A549 (cell line): ENCODE measurements at regions of chr11 and their contacts with region 1.

Region 1: DNA sequence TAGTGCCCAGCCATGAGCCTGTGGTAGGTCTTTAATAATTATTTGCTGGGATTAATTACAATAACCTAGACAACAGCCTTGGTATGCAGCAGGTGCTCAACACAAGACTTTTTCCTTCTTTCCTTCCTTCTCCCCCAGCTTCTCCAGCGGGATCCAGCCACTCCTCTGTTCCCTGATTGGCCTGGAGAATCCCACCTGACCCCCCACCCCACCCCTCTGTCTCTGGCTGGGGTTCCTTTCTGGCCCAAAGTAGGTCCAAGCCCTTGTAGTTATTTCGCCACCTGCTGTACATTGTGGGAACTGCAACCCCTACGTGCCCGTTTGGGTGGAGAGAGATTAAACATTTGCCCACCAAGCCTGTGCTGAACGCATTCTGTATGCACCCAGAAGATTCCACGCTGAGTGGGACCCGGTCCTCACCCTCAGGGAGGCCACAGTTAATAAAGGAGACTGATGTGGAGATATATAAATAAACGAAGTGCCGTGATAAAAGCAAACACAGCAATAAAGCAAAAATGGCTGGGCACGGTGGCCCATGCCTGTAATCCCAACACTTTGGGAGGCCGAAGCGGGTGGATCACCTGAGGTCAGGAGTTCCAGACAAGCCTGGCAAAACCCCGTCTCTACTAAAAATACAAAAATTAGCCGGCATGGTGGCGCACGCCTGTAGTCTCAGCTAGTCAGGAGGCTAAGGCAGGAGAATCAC is 32.1 kb upstream of the DGKZ start:
- DNase-seq: peak; percentile 87 to 98
- ATAC-seq: peak; percentile 69 to 96
- H3K4me3 ChIP-seq: no peak overlapping the region
- H3K27ac ChIP-seq: no peak overlapping the region; a peak in 1 of 6 replicates
- H3K4me1 ChIP-seq: peaks cover under 1% of the 10 kb centered on the region; the same call in 1 of the 3 replicates
- CTCF ChIP-seq: peak; percentile 80
- EP300 ChIP-seq: no peak
- POLR2A ChIP-seq: no peak
- RAD21 ChIP-seq: peak; percentile 73 to 78

Region 2: DNA sequence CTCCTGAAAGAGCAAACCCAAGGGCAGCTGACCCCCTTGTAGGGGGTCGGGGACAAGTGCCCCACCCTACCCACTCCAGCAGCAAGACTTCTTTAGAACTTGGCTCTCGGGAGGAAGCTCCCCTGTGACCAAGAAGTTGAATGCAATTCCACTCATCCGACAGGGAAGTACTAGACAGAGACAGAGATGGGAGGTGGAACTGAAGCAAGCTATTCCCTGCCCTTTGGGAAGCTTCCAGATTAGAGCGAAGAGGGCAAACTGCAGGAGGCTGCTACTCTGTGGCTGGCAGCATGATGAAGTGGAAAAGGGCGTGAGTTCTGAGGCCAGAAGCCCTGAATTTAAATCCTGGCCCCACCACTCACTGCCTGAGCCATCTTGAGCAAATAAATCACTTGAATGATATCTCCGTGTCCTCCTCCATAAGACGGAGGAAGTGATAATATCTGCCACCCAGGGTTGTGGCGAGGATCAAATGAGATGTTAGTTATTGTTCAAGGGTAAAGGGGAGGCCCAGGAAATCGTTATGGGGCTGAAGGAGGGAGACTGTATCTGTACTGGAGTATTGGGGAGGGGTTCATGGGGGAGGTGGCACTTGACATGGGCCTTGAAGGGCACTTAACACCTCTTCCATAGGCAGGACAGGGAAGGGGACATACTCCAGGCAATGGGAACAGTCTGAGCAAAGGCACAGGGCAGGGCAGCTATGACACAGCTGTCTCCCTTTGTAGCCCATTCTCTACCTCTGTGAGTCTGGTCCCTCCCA is 15.9 kb after region 1 on chr11:
- CTCF ChIA-PET with region 1: interaction called, 27 read pairs
- POLR2A ChIA-PET with region 1: no interaction called
- DNase-seq: no peak
- ATAC-seq: no peak
- H3K4me3 ChIP-seq: no peak overlapping the region
- H3K27ac ChIP-seq: no peak overlapping the region
- H3K4me1 ChIP-seq: no peaks in the 10 kb centered on the region
- CTCF ChIP-seq: no peak
- EP300 ChIP-seq: no peak
- POLR2A ChIP-seq: no peak
- RAD21 ChIP-seq: no peak